Activated CD8-positive, alpha-beta memory T cell treated with anti-CD3 and anti-CD28 coated beads, Interleukin-2, amount 10 ng/mL, durations not matched to agents 7 days and 5 days (primary cell): ENCODE measurements at regions of chr18 and their contacts with region 1.

Region 1: DNA sequence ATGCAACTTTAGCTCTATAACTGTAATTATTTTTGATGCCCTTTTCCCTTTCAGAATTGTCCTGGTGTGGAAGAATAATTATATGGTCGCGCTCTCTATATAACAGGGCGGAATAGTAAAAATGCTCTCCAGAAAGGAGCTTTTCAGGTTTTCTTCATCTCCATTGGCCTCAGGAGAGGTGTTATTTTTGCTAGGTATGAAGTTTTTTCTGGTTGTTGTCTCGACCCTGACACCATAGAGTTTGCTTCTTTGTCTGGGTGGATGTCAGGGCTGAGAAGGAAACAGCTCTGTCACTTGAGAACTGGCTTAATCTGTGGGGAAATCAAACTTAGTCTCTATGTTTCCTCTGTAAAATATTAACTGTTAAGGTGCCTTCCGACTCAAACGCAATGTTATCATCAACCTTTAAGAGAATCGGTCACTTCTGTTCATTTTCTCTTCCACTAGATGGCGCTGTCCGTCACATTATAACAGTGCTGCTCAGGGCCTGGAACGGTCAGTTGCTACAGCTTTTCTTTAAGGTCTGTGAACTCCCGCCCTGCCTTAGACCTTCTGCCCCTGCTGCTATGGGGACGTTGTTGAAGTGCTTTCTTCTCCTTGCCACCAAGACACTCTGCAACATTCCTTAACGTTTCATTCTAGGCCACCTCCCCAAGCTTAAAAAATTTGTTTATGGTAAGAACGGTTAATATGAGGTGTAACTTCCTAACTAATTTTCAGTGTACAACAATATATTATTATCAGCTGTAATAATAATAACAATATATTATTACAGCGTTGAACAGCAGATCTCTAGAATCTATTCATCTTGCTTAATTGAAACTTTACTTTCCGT is 23.8 kb upstream of the SERPINB12 start:
- DNase-seq: peak; percentile 70
- ATAC-seq: peak; percentile 91
- H3K4me3 Mint-ChIP-seq: no peak overlapping the region
- H3K27ac Mint-ChIP-seq: no peak overlapping the region
- H3K4me1 Mint-ChIP-seq: no peaks in the 10 kb centered on the region
- H3K27me3 Mint-ChIP-seq: peaks cover 38% of the 10 kb centered on the region

Region 2: DNA sequence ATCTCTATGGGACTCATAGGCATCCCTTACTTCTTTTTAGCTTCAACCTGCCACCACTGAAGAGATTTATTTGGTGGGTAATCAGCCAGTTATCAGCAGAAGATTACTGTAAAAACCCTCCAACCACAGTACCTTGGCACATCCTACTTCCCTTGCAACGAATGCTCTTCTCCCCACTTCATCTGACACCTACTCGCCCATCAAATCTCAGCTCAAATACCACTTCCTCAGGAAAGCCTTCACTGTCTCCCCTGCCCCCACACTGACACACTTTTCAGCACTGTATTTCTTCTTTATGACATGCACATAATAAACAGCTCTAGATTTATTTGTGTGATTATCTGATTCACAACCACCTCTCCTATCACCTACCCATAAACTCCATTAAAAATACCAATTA is 154.4 kb before region 1 on chr18:
- CTCF ChIA-PET with region 1: no interaction called
- DNase-seq: peak; percentile 70
- ATAC-seq: no peak
- H3K4me3 Mint-ChIP-seq: no peak overlapping the region
- H3K27ac Mint-ChIP-seq: no peak overlapping the region
- H3K4me1 Mint-ChIP-seq: peaks cover 39% of the 10 kb centered on the region
- H3K27me3 Mint-ChIP-seq: no peaks in the 10 kb centered on the region

Region 3: DNA sequence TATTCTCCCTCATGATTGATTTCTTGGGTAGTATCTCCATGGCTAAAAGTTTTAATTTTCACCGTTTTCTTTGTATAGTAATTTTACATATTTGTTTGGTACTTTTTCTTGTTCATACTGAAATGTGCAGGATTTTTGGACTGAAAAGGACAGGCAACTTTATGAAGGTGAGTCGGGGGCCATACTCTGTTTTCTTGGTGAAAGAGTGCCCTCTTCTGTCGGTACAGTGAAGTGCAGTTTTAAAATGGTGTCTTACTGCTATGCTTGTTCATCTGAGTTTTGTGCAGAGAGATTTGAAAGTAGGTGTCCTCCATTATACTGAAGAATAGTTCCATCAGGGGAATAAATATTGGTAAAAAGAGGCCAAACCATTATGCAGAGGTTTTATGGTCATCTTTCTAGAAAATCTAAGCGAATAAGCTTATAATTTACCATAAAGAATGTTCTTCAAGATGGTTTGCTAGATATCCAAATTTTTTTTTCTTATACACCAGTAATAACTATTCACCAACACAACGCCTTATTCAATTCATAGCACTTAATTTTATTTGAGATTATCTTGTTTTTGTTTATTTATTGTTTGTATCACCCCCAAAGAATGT is 60.1 kb after region 1 on chr18:
- CTCF ChIA-PET with region 1: interaction called, 105 read pairs
- DNase-seq: no peak
- ATAC-seq: no peak
- H3K4me3 Mint-ChIP-seq: no peak overlapping the region
- H3K27ac Mint-ChIP-seq: no peak overlapping the region
- H3K4me1 Mint-ChIP-seq: no peaks in the 10 kb centered on the region
- H3K27me3 Mint-ChIP-seq: peaks cover 37% of the 10 kb centered on the region

Region 4: GRCh38 chr18:63817441-63818051 is 299.2 kb after region 1 on chr18:
- CTCF ChIA-PET with region 1: no interaction called
- DNase-seq: no peak
- ATAC-seq: no peak
- H3K4me3 Mint-ChIP-seq: no peak overlapping the region
- H3K27ac Mint-ChIP-seq: no peak overlapping the region
- H3K4me1 Mint-ChIP-seq: peaks cover 4% of the 10 kb centered on the region
- H3K27me3 Mint-ChIP-seq: peaks cover 18% of the 10 kb centered on the region